ENCODE measurements at regions of chr3 and their contacts with region 1.

Region 1: GRCh38 chr3:125062888-125063618 is 7.3 kb upstream of the HEG1 start:
- DNase-seq: peak; percentile 95 to 97
- H3K4me3 ChIP-seq: no peak overlapping the region
- H3K4me3 Mint-ChIP-seq: peak overlapping the region; percentile 58
- H3K27ac Mint-ChIP-seq: peak overlapping the region; percentile 97
- H3K4me1 ChIP-seq: peaks cover 89% of the 10 kb centered on the region
- H3K4me1 Mint-ChIP-seq: peaks cover 69% of the 10 kb centered on the region
- H3K27me3 ChIP-seq: no peaks in the 10 kb centered on the region
- H3K27me3 Mint-ChIP-seq: no peaks in the 10 kb centered on the region
- CTCF ChIP-seq: no peak

Region 2: GRCh38 chr3:124834723-124835718 is 228.0 kb before region 1 on chr3:
- CTCF ChIA-PET with region 1: no interaction called
- POLR2A ChIA-PET with region 1: no interaction called
- intact Hi-C with region 1: loop called (anchors 5 kb)
- DNase-seq: peak; percentile 93 to 98
- H3K4me3 ChIP-seq: peak overlapping the region; percentile 30
- H3K4me3 Mint-ChIP-seq: peak overlapping the region; percentile 74
- H3K27ac Mint-ChIP-seq: peak overlapping the region; percentile 100
- H3K4me1 ChIP-seq: peaks cover 74% of the 10 kb centered on the region
- H3K4me1 Mint-ChIP-seq: peaks cover 51% of the 10 kb centered on the region
- H3K27me3 ChIP-seq: no peaks in the 10 kb centered on the region
- H3K27me3 Mint-ChIP-seq: no peaks in the 10 kb centered on the region
- CTCF ChIP-seq: no peak

Region 3: GRCh38 chr3:125079675-125080045 is 16.6 kb after region 1 on chr3:
- CTCF ChIA-PET with region 1: interaction called, 9 read pairs
- POLR2A ChIA-PET with region 1: interaction called, 7 read pairs
- intact Hi-C with region 1: loop called (anchors 2 kb)
- DNase-seq: peak; percentile 60 to 76
- H3K4me3 ChIP-seq: no peak overlapping the region
- H3K4me3 Mint-ChIP-seq: no peak overlapping the region
- H3K27ac Mint-ChIP-seq: peak overlapping the region; percentile 15
- H3K4me1 ChIP-seq: peaks cover 27% of the 10 kb centered on the region
- H3K4me1 Mint-ChIP-seq: peaks cover 27% of the 10 kb centered on the region
- H3K27me3 ChIP-seq: no peaks in the 10 kb centered on the region
- H3K27me3 Mint-ChIP-seq: no peaks in the 10 kb centered on the region
- CTCF ChIP-seq: no peak

Region 4: DNA sequence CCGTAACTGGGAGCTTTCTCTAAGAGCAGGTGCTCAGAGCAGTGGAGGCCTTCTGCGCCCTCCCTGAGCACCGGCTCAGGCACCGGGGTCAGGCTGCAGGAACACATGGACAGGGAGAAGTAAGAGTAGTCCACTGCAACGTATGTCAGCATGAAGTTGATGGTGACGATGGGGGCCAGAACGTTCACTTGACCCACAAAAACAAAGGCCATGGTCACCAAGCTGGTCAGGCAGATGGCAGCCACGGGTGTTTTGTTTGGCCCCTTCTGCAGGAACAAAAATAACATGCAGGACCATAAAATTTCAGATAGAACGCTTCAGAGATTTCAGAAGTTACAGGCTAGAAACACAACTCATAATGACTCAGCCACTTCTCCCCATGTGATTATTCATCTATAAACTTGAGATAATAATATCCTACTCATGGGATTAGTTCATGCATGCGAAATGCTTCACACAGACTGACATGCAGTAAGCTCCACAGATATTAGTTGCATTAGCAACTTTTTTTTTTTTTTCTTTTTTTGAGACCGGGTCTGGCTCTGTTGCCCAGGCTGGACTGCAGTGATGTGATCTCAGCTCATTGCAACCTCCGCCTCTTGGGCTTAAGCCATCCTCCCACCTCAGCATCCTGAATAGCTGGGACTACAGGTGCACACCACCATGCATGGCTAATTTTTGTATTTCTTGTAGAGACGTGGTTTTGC is 45.0 kb after region 1 on chr3:
- CTCF ChIA-PET with region 1: no interaction called
- POLR2A ChIA-PET with region 1: no interaction called
- intact Hi-C with region 1: no loop called
- DNase-seq: no peak
- H3K4me3 ChIP-seq: no peak overlapping the region
- H3K4me3 Mint-ChIP-seq: no peak overlapping the region
- H3K27ac Mint-ChIP-seq: no peak overlapping the region
- H3K4me1 ChIP-seq: no peaks in the 10 kb centered on the region
- H3K4me1 Mint-ChIP-seq: no peaks in the 10 kb centered on the region
- H3K27me3 ChIP-seq: no peaks in the 10 kb centered on the region
- H3K27me3 Mint-ChIP-seq: no peaks in the 10 kb centered on the region
- CTCF ChIP-seq: no peak

Region 5: GRCh38 chr3:125150525-125151441 is 87.7 kb after region 1 on chr3:
- CTCF ChIA-PET with region 1: no interaction called
- POLR2A ChIA-PET with region 1: no interaction called
- intact Hi-C with region 1: loop called (anchors 1 kb)
- DNase-seq: peak; percentile 63 to 74
- H3K4me3 ChIP-seq: no peak overlapping the region
- H3K4me3 Mint-ChIP-seq: no peak overlapping the region
- H3K27ac Mint-ChIP-seq: no peak overlapping the region
- H3K4me1 ChIP-seq: 0 out of 2 replicates have a peak, but pooled peaks cover 5% of the 10 kb centered on the region
- H3K4me1 Mint-ChIP-seq: no peaks in the 10 kb centered on the region
- H3K27me3 ChIP-seq: no peaks in the 10 kb centered on the region
- H3K27me3 Mint-ChIP-seq: no peaks in the 10 kb centered on the region
- CTCF ChIP-seq: peak; percentile 36 to 79

Region 6: DNA sequence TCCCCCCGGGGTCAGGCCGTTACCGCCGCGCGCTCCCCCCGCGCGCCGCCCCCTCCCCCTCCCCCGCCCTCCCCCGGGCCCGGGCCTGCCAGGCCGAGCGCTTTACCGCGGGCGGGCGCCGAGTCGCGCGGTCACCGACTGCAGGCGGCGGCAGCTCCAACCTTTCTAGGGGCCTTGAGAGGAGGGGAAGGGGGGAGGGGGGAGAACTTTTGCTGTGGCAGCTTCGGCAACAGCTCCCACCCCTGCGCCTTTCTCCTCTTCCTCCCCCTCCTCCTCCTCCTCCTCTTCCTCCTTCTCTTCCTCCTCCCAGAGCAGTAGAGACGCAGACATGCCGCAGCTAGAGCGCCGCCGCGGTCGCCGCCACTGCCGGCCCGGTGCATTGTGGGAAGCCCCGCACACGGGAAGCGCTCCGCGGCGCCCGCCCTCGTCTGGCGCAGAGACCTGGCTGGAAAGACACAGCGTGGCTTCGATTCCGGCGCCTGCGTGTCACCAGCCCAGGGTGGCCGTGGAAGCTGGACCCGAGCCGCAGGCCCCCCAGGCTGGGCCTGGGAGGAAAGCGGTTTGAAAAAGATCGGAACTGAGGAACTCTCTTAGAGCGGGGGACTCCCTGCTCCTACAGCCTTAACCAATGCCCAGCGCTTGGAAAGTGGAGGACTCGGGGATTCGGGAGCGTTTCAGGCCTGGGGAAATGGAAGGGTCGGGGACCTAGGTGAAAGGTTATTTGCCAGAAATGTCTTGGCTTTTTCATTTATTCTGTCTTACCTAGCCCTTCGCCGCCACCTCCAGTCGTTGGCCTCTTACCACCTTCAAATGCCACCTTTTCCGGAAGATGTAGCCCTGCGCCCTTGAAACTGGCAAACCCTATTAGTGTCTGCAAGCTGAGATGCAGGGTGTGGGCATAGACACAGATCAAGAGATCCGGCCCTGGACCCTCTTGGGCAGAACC is 312.2 kb after region 1 on chr3 and contains the start of gene ZNF148:
- CTCF ChIA-PET with region 1: no interaction called
- POLR2A ChIA-PET with region 1: no interaction called
- intact Hi-C with region 1: loop called (anchors 10 kb)
- DNase-seq: peak; percentile 89 to 92
- H3K4me3 ChIP-seq: peak within 1 kb of the TSS; percentile 95
- H3K4me3 Mint-ChIP-seq: peak within 1 kb of the TSS; percentile 100
- H3K27ac Mint-ChIP-seq: peak within 1 kb of the TSS; percentile 98
- H3K4me1 ChIP-seq: peaks cover 30% of the 10 kb centered on the region
- H3K4me1 Mint-ChIP-seq: peaks cover 41% of the 10 kb centered on the region
- H3K27me3 ChIP-seq: no peaks in the 10 kb centered on the region
- H3K27me3 Mint-ChIP-seq: no peaks in the 10 kb centered on the region
- CTCF ChIP-seq: no peak
- total RNA-seq, gene ZNF148: 29.4 and 33.3 TPM in 2 replicates

Measured in Caco-2 (cell line).